RWPE1 (cell line): ENCODE measurements at regions of chr3 and their contacts with region 1.

Region 1: DNA sequence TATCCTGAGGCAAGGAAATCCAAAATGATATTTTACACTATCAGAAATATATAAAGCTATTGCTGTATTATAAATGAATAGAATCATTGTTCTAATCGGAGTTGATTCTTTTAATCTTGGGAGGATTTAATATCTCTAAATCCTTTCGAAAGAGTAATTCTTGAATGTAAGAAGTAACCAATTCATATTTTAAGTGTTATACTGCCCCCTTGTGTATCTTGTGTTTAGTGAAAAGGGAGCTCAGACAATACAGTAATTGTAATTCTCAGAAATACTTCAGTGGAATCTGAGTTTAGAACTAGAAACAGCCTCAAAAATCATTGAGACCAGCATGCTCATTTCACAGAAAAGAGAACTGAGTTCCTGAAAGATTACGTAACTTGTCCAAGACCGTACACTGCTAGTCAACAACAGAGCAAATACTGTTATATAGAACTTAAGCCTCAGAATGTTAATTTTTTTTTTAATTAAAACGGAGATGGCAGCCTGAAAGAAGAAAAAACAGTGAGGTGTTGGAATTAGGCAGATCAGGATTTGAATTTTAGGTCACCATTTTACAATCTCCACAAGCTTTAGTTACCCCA is 42.9 kb downstream of the PLCH1 start:
- DNase-seq: peak; percentile 41
- H3K27ac ChIP-seq: no peak overlapping the region
- CTCF ChIP-seq: peak; percentile 62

Region 2: DNA sequence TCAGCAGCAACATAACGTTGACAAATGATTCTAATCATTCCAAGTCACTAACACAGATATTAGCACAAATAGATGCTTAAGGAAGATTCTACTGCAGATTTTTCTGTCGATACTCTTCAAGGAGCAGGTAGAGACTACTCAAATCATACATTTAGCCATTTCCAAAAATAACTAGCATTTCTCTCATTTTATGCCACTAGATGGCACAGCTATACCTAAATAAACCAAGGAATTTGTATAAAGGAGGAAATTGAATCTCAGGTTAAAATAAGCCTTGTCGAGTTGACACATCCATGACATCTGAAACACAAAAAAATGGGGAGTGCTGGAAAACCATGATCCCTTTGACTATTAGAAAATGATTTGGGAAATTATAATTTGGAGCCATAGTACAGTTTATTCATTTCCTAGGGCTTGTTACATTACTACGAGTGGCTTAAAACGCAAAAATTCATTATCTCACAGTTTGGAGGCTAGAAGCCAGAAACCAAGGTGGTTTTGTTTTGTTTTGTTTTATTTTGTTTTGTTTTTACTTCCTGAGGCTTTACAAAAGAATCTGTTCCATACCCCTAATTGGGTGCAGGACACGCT is 349.0 kb before region 1 on chr3:
- CTCF ChIA-PET with region 1: interaction called, 11 read pairs
- POLR2A ChIA-PET with region 1: no interaction called
- DNase-seq: peak; percentile 46
- H3K27ac ChIP-seq: no peak overlapping the region
- CTCF ChIP-seq: peak; percentile 58; the same call in 1 of the 2 replicates